Activated CD8-positive, alpha-beta T cell treated with anti-CD3 and anti-CD28 coated beads, Interleukin-2, amount 10 ng/mL, durations not matched to agents 7 days and 5 days (primary cell): ENCODE measurements at regions of chr10 and their contacts with region 1.

Region 1: GRCh38 chr10:104121520-104122224 is at the start of gene SFR1:
- DNase-seq: peak; percentile 99
- ATAC-seq: peak; percentile 94
- H3K4me3 Mint-ChIP-seq: peak within 1 kb of the TSS; percentile 93
- H3K27ac Mint-ChIP-seq: peak within 1 kb of the TSS; percentile 97
- H3K4me1 Mint-ChIP-seq: peaks cover 27% of the 10 kb centered on the region
- H3K27me3 Mint-ChIP-seq: peaks cover 13% of the 10 kb centered on the region
- total RNA-seq, gene SFR1: 13.0 to 14.9 TPM

Region 2: GRCh38 chr10:103895411-103896186 is 226.1 kb before region 1 on chr10:
- CTCF ChIA-PET with region 1: interaction called, 14 read pairs
- POLR2A ChIA-PET with region 1: interaction called, 11 read pairs
- DNase-seq: no peak
- ATAC-seq: peak; percentile 36
- H3K4me3 Mint-ChIP-seq: no peak overlapping the region
- H3K27ac Mint-ChIP-seq: peak overlapping the region; percentile 43
- H3K4me1 Mint-ChIP-seq: peaks cover 34% of the 10 kb centered on the region
- H3K27me3 Mint-ChIP-seq: no peaks in the 10 kb centered on the region

Region 3: DNA sequence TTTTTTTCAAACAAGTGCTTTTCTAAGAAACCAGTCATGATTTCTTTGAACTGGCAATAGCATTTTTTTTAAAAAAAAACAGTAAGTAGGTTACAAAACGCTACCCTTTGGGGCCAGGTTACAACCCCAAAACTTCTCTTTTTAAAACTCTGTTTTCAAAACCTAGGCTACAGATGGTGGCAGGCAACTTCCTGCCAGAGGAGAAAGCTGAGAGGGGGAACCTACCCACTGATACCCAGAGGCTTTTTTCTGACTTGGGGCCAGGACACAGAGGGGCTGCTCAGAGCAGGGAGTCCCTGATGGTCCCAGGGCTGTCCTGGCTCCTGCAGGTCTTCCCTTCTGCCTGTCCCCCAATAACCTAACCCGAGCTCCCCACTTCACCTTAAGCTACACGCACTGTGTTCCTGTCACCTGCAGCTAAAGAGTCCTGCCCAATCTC is 210.6 kb before region 1 on chr10:
- CTCF ChIA-PET with region 1: interaction called, 23 read pairs
- POLR2A ChIA-PET with region 1: interaction called, 10 read pairs
- DNase-seq: peak; percentile 78
- ATAC-seq: peak; percentile 66
- H3K4me3 Mint-ChIP-seq: peak overlapping the region; percentile 76
- H3K27ac Mint-ChIP-seq: peak overlapping the region; percentile 99
- H3K4me1 Mint-ChIP-seq: peaks cover 77% of the 10 kb centered on the region
- H3K27me3 Mint-ChIP-seq: no peaks in the 10 kb centered on the region

Region 4: GRCh38 chr10:103966671-103967447 is 154.8 kb before region 1 on chr10 and contains the start of gene SLK:
- CTCF ChIA-PET with region 1: interaction called, 12 read pairs
- POLR2A ChIA-PET with region 1: interaction called, 17 read pairs
- DNase-seq: peak; percentile 85
- ATAC-seq: peak; percentile 85
- H3K4me3 Mint-ChIP-seq: peak within 1 kb of the TSS; percentile 96
- H3K27ac Mint-ChIP-seq: peak within 1 kb of the TSS; percentile 95
- H3K4me1 Mint-ChIP-seq: peaks cover 32% of the 10 kb centered on the region
- H3K27me3 Mint-ChIP-seq: no peaks in the 10 kb centered on the region
- total RNA-seq, gene SLK: 32.6 to 33.5 TPM

Region 5: DNA sequence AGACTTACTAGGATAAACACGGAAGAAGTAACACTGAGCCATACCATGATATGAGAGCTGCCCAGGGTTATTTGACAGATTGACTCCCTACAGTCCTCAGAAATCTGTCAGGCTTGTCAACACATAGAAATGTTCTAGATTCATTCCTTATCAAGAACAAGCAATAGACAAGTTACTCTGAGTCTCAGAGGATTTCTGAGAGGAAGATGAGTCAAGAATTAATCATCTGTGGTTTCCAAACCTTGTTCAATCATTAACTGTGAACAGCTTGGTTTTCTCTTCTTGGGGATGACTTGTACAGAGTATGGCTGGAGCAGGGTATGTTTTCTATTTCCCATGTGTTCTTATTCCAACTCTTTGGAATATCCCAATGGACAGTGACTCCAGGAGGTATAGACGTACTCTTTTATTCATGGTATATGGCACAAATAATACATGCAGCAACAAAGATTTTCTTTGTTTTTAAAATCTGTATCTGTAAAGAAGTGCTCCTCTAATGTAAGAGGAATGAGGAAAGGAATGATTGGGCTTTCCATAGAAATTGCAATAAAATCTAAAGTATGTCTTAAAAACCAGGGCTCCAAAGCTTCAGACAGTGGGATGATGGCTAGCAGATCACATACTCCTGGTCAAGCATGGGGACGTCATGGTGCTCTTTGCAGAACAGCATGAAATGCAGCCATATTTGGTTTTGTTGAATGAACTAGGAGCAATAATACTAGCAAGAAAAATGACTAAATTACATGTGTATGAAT is 11.6 kb before region 1 on chr10:
- CTCF ChIA-PET with region 1: interaction called, 16 read pairs
- POLR2A ChIA-PET with region 1: interaction called, 13 read pairs
- DNase-seq: no peak
- ATAC-seq: no peak
- H3K4me3 Mint-ChIP-seq: no peak overlapping the region
- H3K27ac Mint-ChIP-seq: no peak overlapping the region
- H3K4me1 Mint-ChIP-seq: peaks cover 4% of the 10 kb centered on the region
- H3K27me3 Mint-ChIP-seq: peaks cover 15% of the 10 kb centered on the region

Region 6: GRCh38 chr10:104274762-104275721 is 153.4 kb after region 1 on chr10:
- CTCF ChIA-PET with region 1: interaction called, 18 read pairs
- POLR2A ChIA-PET with region 1: interaction called, 3 read pairs
- DNase-seq: peak; percentile 49
- ATAC-seq: peak; percentile 90
- H3K4me3 Mint-ChIP-seq: peak overlapping the region; percentile 45
- H3K27ac Mint-ChIP-seq: no peak overlapping the region
- H3K4me1 Mint-ChIP-seq: peaks cover 8% of the 10 kb centered on the region
- H3K27me3 Mint-ChIP-seq: peaks cover 20% of the 10 kb centered on the region